HEK293 (cell line): ENCODE measurements at regions of chr9 and their contacts with region 1.

Region 1: DNA sequence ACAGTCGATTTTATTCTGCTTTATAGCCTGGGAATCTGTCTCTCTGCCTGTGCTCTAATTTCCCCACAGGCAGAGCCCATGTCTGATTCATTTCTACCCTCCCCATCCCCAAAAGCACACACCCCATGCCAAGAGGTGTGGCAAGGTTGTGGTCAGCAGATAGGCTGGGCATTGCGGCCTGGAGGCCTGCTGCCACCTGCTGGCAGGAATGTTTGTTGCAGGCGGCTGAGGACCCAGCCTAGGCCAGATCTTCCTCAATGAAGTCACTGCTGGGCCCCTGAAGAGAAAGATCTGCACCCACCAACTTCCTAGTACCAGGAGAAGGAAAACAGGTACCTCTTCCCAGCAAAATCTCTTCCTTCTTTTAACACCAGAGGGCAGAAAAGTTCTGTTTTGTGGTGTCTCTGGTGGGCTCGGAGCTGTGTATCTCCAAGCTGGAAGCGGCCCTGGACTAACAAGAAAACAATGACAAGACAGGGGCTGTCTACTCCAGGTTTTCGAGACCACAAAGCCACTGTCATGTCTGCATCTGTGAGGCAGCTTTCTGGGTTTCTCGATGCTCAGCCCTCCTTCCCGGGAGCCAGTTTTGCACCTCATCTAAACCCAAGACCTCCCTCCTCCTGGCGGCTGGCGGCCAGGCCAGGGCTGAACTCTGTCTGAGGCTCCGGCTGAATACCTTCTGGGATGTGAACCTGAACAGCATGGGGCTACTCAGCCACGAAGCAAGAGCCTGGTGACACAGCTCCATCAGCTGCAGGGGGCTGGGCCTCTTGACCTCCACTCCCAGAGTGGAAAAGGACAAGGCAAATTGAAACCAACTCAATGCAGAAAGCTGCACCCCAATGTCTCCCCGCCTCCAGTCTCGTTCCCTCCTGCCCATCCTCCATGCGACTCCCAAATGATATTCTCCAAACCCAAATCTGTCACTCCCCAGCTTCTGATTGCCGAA is 4.9 kb downstream of the ANKS6 start:
- H3K4me3 ChIP-seq: no peak overlapping the region
- H3K27ac ChIP-seq: no peak overlapping the region
- H3K4me1 ChIP-seq: no peaks in the 10 kb centered on the region
- CTCF ChIP-seq: peak; percentile 78

Region 2: DNA sequence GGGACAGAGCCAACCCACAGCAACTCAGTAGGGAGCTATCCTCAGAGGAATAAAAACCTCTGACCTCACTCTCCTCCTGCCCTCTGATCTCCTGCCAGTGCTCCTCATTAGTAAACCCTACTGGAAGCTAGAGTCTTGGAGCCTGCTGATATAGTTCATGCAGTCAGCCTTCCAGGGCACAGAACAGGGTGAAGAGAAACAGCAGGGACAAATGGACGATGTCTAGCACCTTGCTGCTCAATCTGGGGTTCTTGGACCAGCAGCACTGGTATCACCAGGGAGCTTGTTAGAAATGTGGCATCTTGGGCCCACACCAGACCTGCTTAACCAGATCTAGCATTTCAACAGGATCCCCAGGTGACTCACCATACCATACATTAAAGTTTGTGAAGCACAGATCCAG is 10.5 kb after region 1 on chr9:
- CTCF ChIA-PET with region 1: interaction called, 15 read pairs
- POLR2A ChIA-PET with region 1: interaction called, 5 read pairs
- H3K4me3 ChIP-seq: no peak overlapping the region
- H3K27ac ChIP-seq: no peak overlapping the region
- H3K4me1 ChIP-seq: no peaks in the 10 kb centered on the region
- CTCF ChIP-seq: no peak